Psoas muscle (tissue), 8 donors: ENCODE measurements at regions of chr5 and their contacts with region 1.

Region 1: GRCh38 chr5:54217826-54218503 is 92.4 kb downstream of the ARL15 start:
- DNase-seq: no peak
- ATAC-seq: peak; percentile 62 to 85 (median 78)
- H3K4me3 ChIP-seq: no peak overlapping the region
- H3K27ac ChIP-seq: no peak overlapping the region
- H3K4me1 ChIP-seq: no peaks in the 10 kb centered on the region
- H3K27me3 ChIP-seq: no peaks in the 10 kb centered on the region
- CTCF ChIP-seq: peak; percentile 82

Region 2: GRCh38 chr5:52948418-52949076 is 1269.4 kb before region 1 on chr5:
- intact Hi-C with region 1: loop called in 1 of 2 experiments (anchors 10 kb)
- DNase-seq: peak in 1 of 2 donors; percentile 17
- ATAC-seq: peak; percentile 71 to 81 (median 78)
- H3K4me3 ChIP-seq: no peak overlapping the region
- H3K27ac ChIP-seq: no peak overlapping the region
- H3K4me1 ChIP-seq: no peaks in the 10 kb centered on the region
- H3K27me3 ChIP-seq: no peaks in the 10 kb centered on the region
- CTCF ChIP-seq: peak; percentile 71

Region 3: DNA sequence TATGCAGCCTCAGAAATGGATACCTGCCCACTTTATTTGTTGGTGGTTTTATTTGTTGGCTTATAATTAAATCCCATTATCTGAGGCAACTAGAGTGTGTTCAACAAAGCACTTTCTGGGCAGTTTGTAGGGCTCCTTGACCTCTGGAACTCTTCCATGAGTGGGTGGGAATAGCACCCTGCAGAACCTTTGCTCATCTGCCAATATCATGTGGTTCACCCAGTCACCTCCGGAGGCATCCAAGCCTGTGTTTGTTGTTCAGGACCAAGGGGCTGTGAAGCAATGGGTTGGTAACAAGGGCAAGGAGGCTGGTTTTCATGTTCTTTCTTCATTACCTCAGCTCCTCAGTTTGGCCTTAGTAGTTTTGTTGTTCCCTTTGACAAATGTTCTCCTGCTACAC is 343.6 kb before region 1 on chr5:
- intact Hi-C with region 1: loop called in 1 of 2 experiments (anchors 10 kb)
- DNase-seq: no peak
- ATAC-seq: no peak
- H3K4me3 ChIP-seq: no peak overlapping the region
- H3K27ac ChIP-seq: no peak overlapping the region
- H3K4me1 ChIP-seq: no peaks in the 10 kb centered on the region
- H3K27me3 ChIP-seq: no peaks in the 10 kb centered on the region
- CTCF ChIP-seq: no peak

Region 4: GRCh38 chr5:53983568-53984460 is 234.2 kb before region 1 on chr5:
- intact Hi-C with region 1: loop called in 1 of 2 experiments (anchors 10 kb)
- DNase-seq: no peak
- ATAC-seq: no peak
- H3K4me3 ChIP-seq: no peak overlapping the region
- H3K27ac ChIP-seq: no peak overlapping the region
- H3K4me1 ChIP-seq: no peaks in the 10 kb centered on the region
- H3K27me3 ChIP-seq: no peaks in the 10 kb centered on the region
- CTCF ChIP-seq: no peak

Region 5: DNA sequence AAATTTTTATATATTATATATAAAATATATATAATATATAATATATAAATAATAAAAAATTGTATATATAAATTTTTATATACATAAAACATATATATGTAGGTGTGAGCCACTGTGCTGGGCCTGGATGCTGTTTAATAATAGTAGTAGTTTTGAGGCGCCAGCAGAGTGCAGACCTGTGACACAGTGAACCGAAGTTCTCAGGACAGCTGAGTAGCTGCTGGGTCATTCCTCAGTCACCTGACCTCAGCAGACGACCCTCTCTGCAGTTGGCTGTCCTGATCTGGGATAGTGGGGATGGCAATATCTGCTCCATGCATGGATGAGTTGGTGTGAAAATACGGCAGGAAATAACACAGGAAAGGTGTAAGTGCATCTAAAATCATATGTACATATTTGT is 296.3 kb after region 1 on chr5:
- intact Hi-C with region 1: no loop called
- DNase-seq: no peak
- ATAC-seq: no peak
- H3K4me3 ChIP-seq: no peak overlapping the region
- H3K27ac ChIP-seq: no peak overlapping the region
- H3K4me1 ChIP-seq: peaks cover 2% of the 10 kb centered on the region
- H3K27me3 ChIP-seq: no peaks in the 10 kb centered on the region
- CTCF ChIP-seq: no peak